Cardiac septum (tissue), 1 donor: ENCODE measurements at regions of chr1 and their contacts with region 1.

Region 1: GRCh38 chr1:59107516-59107915 is 189.4 kb upstream of the FGGY start:
- DNase-seq: peak; percentile 80

Region 2: GRCh38 chr1:59136541-59137275 is 29.2 kb after region 1 on chr1:
- intact Hi-C with region 1: loop called (anchors 2 kb)
- DNase-seq: no peak